Posterior cingulate gyrus (tissue), 11 donors: ENCODE measurements at regions of chr12 and their contacts with region 1.

Region 1: GRCh38 chr12:47935184-47935583 is 28.2 kb upstream of the TMEM106C start:
- DNase-seq: peak in 1 of 10 donors; percentile 7

Region 2: GRCh38 chr12:47844274-47845019 is 90.7 kb before region 1 on chr12:
- intact Hi-C with region 1: loop called (anchors 10 kb)
- DNase-seq: peak in 6 of 10 donors; percentile 28 to 88 (median 73)

Region 3: DNA sequence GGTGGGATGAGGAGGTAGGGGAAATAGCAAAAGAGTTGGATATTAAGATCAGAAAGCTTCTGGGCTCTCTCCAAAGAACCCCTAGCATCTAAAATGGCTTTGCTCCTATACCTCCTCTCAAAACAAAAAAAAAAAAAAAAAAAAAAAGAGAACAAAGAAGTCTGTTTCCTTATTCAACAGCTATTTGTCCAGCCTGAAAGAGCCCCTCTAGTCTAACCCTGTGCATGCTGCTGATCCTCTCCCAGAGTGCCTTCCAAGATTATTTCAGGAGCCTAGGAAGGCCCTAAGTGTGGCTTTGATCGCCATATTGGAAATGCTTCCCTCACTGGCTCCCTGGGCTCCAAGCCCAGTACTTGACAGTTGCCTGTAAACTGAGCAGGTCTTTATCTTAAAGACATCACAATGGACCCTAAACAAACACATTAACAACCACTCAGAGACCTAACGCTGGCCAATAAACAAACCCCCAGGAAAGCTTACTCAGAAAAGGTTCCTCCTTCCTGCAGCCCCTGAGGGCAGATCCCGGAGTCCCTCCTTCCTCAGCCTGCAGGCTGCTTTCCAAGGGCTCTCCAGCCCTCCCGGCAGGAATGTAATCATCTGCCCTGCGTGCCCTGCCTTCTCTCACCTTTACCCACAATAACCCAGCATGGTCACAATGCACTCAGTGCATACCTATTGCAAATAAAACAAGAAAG is 86.4 kb after region 1 on chr12:
- intact Hi-C with region 1: no loop called
- DNase-seq: peak in 1 of 10 donors; percentile 15